Right ventricle myocardium inferior (tissue), 1 donor: ENCODE measurements at regions of chr2 and their contacts with region 1.

Region 1: GRCh38 chr2:186589612-186590349 is at the start of gene ITGAV:
- DNase-seq: peak; percentile 97
- ATAC-seq: peak; percentile 98
- total RNA-seq, gene ITGAV: 139 TPM

Region 2: GRCh38 chr2:186485871-186486650 is 103.7 kb before region 1 on chr2 and contains the start of gene ZC3H15:
- intact Hi-C with region 1: loop called (anchors 5 kb)
- DNase-seq: peak; percentile 99
- ATAC-seq: peak; percentile 100
- total RNA-seq, gene ZC3H15: 27.2 TPM

Region 3: DNA sequence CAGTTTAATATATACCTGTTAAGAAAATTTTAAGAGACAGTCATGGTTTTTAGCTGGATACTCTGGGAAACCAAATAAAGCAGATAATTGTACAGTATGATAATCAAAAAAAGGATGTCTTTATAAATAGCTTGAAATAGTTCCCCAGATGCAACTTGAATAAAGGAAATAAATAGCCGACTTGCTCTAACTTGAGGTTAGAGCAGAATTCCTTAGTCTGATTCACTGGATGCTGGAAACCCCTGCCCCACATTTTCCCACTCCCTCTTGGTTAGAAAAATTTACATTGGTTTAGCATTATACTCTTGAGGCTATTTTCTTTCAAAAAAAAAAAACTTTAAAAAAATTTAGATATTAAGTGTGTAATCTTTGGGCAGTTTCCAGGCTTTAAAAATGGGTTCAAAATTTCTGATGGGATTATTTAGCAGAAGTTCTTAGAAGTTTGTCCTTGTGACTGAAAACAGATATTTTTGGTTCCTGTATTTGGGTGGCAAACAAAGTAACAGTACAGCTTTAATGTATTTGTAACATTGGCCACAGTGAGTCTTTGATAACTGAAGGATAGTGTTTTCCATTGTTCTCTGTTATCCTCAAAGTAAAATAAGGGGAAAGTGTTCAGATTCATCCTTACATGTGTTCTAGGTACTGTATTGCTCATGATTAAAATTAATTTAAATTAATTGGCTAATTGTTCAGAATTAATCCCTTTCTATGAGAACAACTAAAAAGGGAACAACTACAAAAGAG is 39.6 kb after region 1 on chr2:
- intact Hi-C with region 1: loop called (anchors 5 kb)
- DNase-seq: no peak
- ATAC-seq: no peak